Activated naive CD4-positive, alpha-beta T cell treated with anti-CD3 and anti-CD28 coated beads, Interleukin-2, amount 10 ng/mL, durations not matched to agents 7 days and 5 days (primary cell): ENCODE measurements at regions of chr9 and their contacts with region 1.

Region 1: GRCh38 chr9:32571969-32572899 is 725 bp downstream of the NDUFB6 start:
- DNase-seq: peak; percentile 83
- H3K4me3 Mint-ChIP-seq: peak overlapping the region; percentile 98
- H3K27ac Mint-ChIP-seq: peak overlapping the region; percentile 99
- H3K4me1 Mint-ChIP-seq: peaks cover 30% of the 10 kb centered on the region
- H3K27me3 Mint-ChIP-seq: no peaks in the 10 kb centered on the region

Region 2: GRCh38 chr9:32384364-32385151 is 187.7 kb before region 1 on chr9 and contains the start of gene ACO1:
- CTCF ChIA-PET with region 1: interaction called, 421 read pairs
- DNase-seq: peak; percentile 90
- H3K4me3 Mint-ChIP-seq: peak within 1 kb of the TSS; percentile 78
- H3K27ac Mint-ChIP-seq: peak within 1 kb of the TSS; percentile 20
- H3K4me1 Mint-ChIP-seq: peaks cover 21% of the 10 kb centered on the region
- H3K27me3 Mint-ChIP-seq: peaks cover 37% of the 10 kb centered on the region

Region 3: DNA sequence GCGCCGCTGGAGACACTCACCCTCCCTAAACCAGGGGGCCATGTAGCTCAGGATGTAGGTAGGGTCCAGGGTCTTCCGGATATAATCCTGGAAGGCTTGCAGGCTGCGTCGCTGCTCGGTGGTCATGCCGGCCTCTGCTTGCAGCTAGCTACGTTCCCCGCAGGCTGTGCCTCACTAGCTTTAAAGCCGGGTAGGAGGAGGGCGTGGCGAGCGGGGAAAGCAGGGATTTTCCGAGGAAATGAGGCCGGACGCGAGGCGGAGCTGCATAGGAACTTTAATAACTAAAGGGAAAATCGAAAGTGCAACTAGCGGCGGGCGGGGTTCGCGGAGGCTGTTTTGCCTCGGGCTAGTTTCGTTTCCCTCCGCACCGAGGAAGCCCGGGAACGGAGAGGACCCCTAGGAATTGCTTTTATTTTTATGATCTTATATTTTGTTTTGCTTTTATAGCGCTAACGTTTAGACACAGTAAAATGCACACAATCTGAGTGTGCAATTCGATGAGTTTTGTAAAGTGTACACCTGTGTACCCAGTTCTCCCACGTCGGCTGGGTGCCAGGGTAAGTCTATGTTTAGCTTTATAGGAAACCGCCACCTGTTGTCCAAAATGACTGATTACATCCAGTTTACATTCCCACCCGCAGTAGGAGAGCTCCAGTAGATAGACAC is 46.1 kb before region 1 on chr9 and contains the start of gene RIGI:
- CTCF ChIA-PET with region 1: interaction called, 19 read pairs
- DNase-seq: peak; percentile 90
- H3K4me3 Mint-ChIP-seq: peak within 1 kb of the TSS; percentile 91
- H3K27ac Mint-ChIP-seq: peak within 1 kb of the TSS; percentile 94
- H3K4me1 Mint-ChIP-seq: peaks cover 48% of the 10 kb centered on the region
- H3K27me3 Mint-ChIP-seq: no peaks in the 10 kb centered on the region

Region 4: DNA sequence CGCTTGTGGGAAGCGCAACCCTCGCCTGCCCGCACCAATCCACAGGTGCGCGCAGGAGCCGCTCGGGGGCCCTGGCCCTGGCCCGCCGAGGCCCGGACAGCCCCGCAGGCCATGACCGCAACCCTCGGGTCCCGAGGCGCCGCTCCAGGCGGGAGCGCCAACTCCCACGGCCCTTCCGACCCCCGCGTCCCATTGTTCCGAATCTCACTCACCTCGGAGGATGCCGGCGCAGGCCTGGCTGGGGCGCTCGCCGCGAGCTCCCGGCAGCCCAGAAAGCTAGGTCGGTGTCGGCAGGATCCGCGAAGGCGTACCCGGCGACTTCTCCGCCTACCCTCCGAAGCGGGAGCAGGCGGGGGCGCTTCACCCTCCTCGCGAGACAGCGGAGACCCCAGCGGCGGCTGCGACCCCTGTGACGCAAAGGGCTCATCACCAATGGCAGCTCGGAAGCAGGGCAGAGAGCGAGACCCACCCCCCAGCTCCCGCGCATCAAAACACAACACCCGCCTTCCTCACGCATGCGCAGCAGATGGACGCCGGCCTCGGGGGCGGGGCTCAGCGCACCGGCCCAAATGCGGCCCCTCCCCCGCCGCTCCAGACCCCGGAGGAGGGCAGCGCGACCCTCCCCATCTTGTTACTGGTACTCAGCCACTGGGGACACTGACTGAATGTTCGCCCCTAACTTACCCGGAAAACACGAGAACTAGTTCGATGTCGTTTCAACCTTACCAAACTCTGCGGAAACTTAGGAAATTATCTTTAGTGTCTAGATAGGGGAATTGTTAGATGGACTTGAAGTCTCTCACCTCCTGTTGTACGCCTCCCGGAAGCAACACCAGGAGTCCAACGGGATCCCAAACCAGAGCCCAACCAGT is 21.4 kb before region 1 on chr9:
- CTCF ChIA-PET with region 1: interaction called, 14 read pairs
- DNase-seq: peak; percentile 97
- H3K4me3 Mint-ChIP-seq: peak overlapping the region; percentile 87
- H3K27ac Mint-ChIP-seq: peak overlapping the region; percentile 99
- H3K4me1 Mint-ChIP-seq: peaks cover 36% of the 10 kb centered on the region
- H3K27me3 Mint-ChIP-seq: no peaks in the 10 kb centered on the region